ENCODE measurements at regions of chr3 and their contacts with region 1.

Region 1: GRCh38 chr3:139329345-139329850 is 14.4 kb upstream of the MRPS22 start:
- DNase-seq: peak; percentile 80 to 88
- ATAC-seq: peak; percentile 94 to 98 (median 97)
- H3K4me3 ChIP-seq: no peak overlapping the region
- H3K4me3 Mint-ChIP-seq: peak overlapping the region; percentile 52
- H3K27ac ChIP-seq: no peak overlapping the region
- H3K27ac Mint-ChIP-seq: no peak overlapping the region
- H3K4me1 ChIP-seq: peaks cover 11% of the 10 kb centered on the region
- H3K4me1 Mint-ChIP-seq: peaks cover 6 to 16% of the 10 kb centered on the region in 2 donors
- H3K27me3 ChIP-seq: peaks cover 7% of the 10 kb centered on the region
- H3K27me3 Mint-ChIP-seq: peaks cover 18 to 39% of the 10 kb centered on the region in 2 donors
- CTCF ChIP-seq: peak; percentile 99

Region 2: GRCh38 chr3:138417559-138417982 is 911.8 kb before region 1 on chr3:
- intact Hi-C with region 1: loop called (anchors 2 kb)
- DNase-seq: peak; percentile 41 to 78
- ATAC-seq: peak; percentile 60 to 88 (median 72)
- H3K4me3 ChIP-seq: no peak overlapping the region
- H3K4me3 Mint-ChIP-seq: no peak overlapping the region
- H3K27ac ChIP-seq: no peak overlapping the region
- H3K27ac Mint-ChIP-seq: no peak overlapping the region
- H3K4me1 ChIP-seq: no peaks in the 10 kb centered on the region
- H3K4me1 Mint-ChIP-seq: no peaks in the 10 kb centered on the region
- H3K27me3 ChIP-seq: no peaks in the 10 kb centered on the region
- H3K27me3 Mint-ChIP-seq: peaks cover 8 to 14% of the 10 kb centered on the region in 2 donors
- CTCF ChIP-seq: peak; percentile 82

Region 3: GRCh38 chr3:138935848-138936740 is 393.3 kb before region 1 on chr3:
- intact Hi-C with region 1: loop called (anchors 1 kb)
- DNase-seq: peak; percentile 66 to 82
- ATAC-seq: peak; percentile 86 to 93 (median 89)
- H3K4me3 ChIP-seq: peak overlapping the region; percentile 21
- H3K4me3 Mint-ChIP-seq: peak overlapping the region; percentile 85
- H3K27ac ChIP-seq: no peak overlapping the region
- H3K27ac Mint-ChIP-seq: no peak overlapping the region
- H3K4me1 ChIP-seq: peaks cover 43% of the 10 kb centered on the region
- H3K4me1 Mint-ChIP-seq: peaks cover 18 to 41% of the 10 kb centered on the region in 2 donors
- H3K27me3 ChIP-seq: peaks cover 64% of the 10 kb centered on the region
- H3K27me3 Mint-ChIP-seq: peaks cover 61 to 67% of the 10 kb centered on the region in 2 donors
- CTCF ChIP-seq: peak; percentile 95

Region 4: GRCh38 chr3:139111392-139112229 is 217.8 kb before region 1 on chr3:
- intact Hi-C with region 1: loop called (anchors 2 kb)
- DNase-seq: peak; percentile 34 to 66
- ATAC-seq: peak; percentile 52 to 75 (median 68)
- H3K4me3 ChIP-seq: no peak overlapping the region
- H3K4me3 Mint-ChIP-seq: no peak overlapping the region
- H3K27ac ChIP-seq: no peak overlapping the region
- H3K27ac Mint-ChIP-seq: no peak overlapping the region
- H3K4me1 ChIP-seq: peaks cover 5% of the 10 kb centered on the region
- H3K4me1 Mint-ChIP-seq: peaks cover 9 to 24% of the 10 kb centered on the region in 2 donors
- H3K27me3 ChIP-seq: no peaks in the 10 kb centered on the region
- H3K27me3 Mint-ChIP-seq: peaks cover 0 to 4% of the 10 kb centered on the region in 2 donors
- CTCF ChIP-seq: peak; percentile 36

Region 5: GRCh38 chr3:139358841-139359562 is 29.6 kb after region 1 on chr3:
- intact Hi-C with region 1: no loop called
- DNase-seq: no peak
- ATAC-seq: no peak
- H3K4me3 ChIP-seq: no peak overlapping the region
- H3K4me3 Mint-ChIP-seq: no peak overlapping the region
- H3K27ac ChIP-seq: no peak overlapping the region
- H3K27ac Mint-ChIP-seq: peak overlapping the region in 1 of 2 donors; percentile 14
- H3K4me1 ChIP-seq: no peaks in the 10 kb centered on the region
- H3K4me1 Mint-ChIP-seq: peaks cover 7 to 15% of the 10 kb centered on the region in 2 donors
- H3K27me3 ChIP-seq: no peaks in the 10 kb centered on the region
- H3K27me3 Mint-ChIP-seq: no peaks in the 10 kb centered on the region
- CTCF ChIP-seq: no peak

Region 6: DNA sequence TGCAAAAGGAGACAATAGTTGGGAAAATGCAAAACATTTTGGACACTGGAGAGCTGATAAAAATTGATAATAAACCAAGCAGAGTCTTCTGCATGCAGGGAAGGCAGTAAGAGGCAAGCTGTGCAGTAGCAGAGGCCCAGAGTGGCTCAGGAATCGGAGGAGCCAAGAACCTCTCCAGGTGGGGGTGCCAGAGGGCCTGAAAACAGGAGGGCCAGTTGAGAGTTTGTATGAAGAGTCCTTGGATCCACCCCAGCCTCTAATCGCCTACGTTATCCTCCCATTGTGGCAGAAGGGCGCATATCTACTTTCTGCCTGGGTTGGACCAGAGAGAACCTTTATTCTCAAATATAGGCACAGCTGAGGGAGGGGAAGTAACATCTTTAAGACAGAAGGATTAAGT is 259.1 kb after region 1 on chr3:
- intact Hi-C with region 1: no loop called
- DNase-seq: no peak
- ATAC-seq: no peak
- H3K4me3 ChIP-seq: no peak overlapping the region
- H3K4me3 Mint-ChIP-seq: no peak overlapping the region
- H3K27ac ChIP-seq: no peak overlapping the region
- H3K27ac Mint-ChIP-seq: no peak overlapping the region
- H3K4me1 ChIP-seq: no peaks in the 10 kb centered on the region
- H3K4me1 Mint-ChIP-seq: peaks cover 8 to 9% of the 10 kb centered on the region in 2 donors
- H3K27me3 ChIP-seq: no peaks in the 10 kb centered on the region
- H3K27me3 Mint-ChIP-seq: no peaks in the 10 kb centered on the region
- CTCF ChIP-seq: no peak

Measured in natural killer cell (primary cell).